CD8-positive, alpha-beta T cell (primary cell): ENCODE measurements at regions of chr17 and their contacts with region 1.

Region 1: DNA sequence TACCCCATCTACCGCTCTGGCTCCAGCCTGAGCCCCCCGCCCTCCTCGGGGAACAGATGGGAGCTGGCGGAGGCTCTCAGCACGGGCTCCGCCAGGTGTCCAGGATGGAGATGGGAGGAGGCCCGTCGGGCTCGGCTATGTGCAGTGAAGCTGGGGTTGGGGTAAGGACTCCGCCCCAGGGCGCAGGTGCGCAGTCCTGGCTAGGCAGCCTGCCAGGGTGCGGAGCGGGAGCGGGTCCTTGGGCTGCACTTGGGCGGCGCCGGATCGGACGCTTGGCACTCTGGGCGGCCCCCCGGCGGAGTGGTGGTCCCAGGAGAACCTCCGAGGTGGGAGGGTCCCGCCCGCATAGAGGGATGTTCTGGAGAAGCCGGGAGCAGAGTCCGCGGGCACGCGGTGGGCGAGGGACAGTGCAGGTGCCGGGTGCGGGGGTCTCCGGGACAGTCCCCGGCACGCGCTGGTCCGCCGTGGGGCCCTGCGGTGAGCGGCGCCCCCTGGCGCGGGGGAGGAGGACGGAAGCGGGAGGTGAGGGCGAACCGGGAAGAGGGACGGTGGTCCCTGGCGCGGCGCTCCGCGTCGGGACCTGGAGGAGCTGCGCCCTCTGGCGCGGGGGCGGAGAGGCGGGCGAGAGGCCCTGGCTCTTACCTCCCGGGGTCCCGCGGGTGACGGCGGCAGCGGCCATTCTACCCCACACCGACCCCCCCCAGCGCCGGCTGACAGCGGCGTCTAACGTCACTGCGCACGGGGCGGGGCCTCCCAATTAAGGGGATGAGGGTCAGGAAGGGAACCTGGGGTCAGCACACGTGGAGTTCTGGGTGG is at the start of gene CAMTA2:
- DNase-seq: peak; percentile 69 to 92 (median 91)
- ATAC-seq: peak; percentile 91
- H3K4me3 ChIP-seq: peak within 1 kb of the TSS; percentile 98 to 100
- H3K4me3 Mint-ChIP-seq: peak within 1 kb of the TSS; percentile 91
- H3K27ac ChIP-seq: peak within 1 kb of the TSS; percentile 80 to 98
- H3K27ac Mint-ChIP-seq: peak within 1 kb of the TSS; percentile 95
- H3K4me1 ChIP-seq: peaks cover 27% of the 10 kb centered on the region
- H3K4me1 Mint-ChIP-seq: peaks cover 38% of the 10 kb centered on the region
- H3K27me3 ChIP-seq: no peaks in the 10 kb centered on the region
- H3K27me3 Mint-ChIP-seq: no peaks in the 10 kb centered on the region
- CTCF ChIP-seq: peak; percentile 76
- total RNA-seq, gene CAMTA2: 40.1 to 42.3 TPM

Region 2: DNA sequence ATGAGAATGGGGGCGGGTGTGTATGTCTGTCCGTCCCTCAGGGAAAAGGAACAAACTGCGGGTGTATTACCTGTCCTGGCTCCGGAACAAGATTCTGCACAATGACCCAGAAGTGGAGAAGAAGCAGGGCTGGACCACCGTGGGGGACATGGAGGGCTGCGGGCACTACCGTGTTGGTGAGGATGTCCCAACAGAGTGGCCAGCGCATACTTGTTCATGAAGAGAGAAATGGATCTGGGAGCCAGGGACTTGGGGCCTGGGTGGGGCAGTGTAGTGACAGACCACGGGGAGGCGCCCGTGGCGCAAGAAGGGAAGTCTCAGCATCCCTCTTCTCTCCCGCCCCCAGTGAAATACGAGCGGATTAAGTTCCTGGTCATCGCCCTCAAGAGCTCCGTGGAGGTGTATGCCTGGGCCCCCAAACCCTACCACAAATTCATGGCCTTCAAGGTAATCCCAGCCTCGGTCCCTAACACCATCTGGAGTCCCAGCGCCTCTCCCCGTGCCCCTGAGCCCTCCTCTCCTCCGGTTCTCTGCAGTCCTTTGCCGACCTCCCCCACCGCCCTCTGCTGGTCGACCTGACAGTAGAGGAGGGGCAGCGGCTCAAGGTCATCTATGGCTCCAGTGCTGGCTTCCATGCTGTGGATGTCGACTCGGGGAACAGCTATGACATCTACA is 91.4 kb before region 1 on chr17:
- CTCF ChIA-PET with region 1: no interaction called
- POLR2A ChIA-PET with region 1: no interaction called
- intact Hi-C with region 1: no loop called
- DNase-seq: peak in 1 of 9 experiments; percentile 18
- ATAC-seq: no peak
- H3K4me3 ChIP-seq: no peak overlapping the region
- H3K4me3 Mint-ChIP-seq: no peak overlapping the region
- H3K27ac ChIP-seq: no peak overlapping the region
- H3K27ac Mint-ChIP-seq: no peak overlapping the region
- H3K4me1 ChIP-seq: peaks cover 20% of the 10 kb centered on the region
- H3K4me1 Mint-ChIP-seq: peaks cover 14% of the 10 kb centered on the region
- H3K27me3 ChIP-seq: no peaks in the 10 kb centered on the region
- H3K27me3 Mint-ChIP-seq: no peaks in the 10 kb centered on the region
- CTCF ChIP-seq: no peak

Region 3: GRCh38 chr17:4948931-4949320 is 38.2 kb before region 1 on chr17:
- CTCF ChIA-PET with region 1: no interaction called
- POLR2A ChIA-PET with region 1: interaction called, 5 read pairs
- intact Hi-C with region 1: loop called in 1 of 2 experiments (anchors 1 kb)
- DNase-seq: peak; percentile 44 to 90 (median 70)
- ATAC-seq: peak; percentile 26
- H3K4me3 ChIP-seq: peak overlapping the region; percentile 99 to 100
- H3K4me3 Mint-ChIP-seq: peak overlapping the region; percentile 94
- H3K27ac ChIP-seq: peak overlapping the region; percentile 72 to 81
- H3K27ac Mint-ChIP-seq: peak overlapping the region; percentile 93
- H3K4me1 ChIP-seq: peaks cover 38% of the 10 kb centered on the region
- H3K4me1 Mint-ChIP-seq: peaks cover 45% of the 10 kb centered on the region
- H3K27me3 ChIP-seq: no peaks in the 10 kb centered on the region
- H3K27me3 Mint-ChIP-seq: no peaks in the 10 kb centered on the region
- CTCF ChIP-seq: no peak